ENCODE measurements at regions of chr4 and their contacts with region 1.

Region 1: DNA sequence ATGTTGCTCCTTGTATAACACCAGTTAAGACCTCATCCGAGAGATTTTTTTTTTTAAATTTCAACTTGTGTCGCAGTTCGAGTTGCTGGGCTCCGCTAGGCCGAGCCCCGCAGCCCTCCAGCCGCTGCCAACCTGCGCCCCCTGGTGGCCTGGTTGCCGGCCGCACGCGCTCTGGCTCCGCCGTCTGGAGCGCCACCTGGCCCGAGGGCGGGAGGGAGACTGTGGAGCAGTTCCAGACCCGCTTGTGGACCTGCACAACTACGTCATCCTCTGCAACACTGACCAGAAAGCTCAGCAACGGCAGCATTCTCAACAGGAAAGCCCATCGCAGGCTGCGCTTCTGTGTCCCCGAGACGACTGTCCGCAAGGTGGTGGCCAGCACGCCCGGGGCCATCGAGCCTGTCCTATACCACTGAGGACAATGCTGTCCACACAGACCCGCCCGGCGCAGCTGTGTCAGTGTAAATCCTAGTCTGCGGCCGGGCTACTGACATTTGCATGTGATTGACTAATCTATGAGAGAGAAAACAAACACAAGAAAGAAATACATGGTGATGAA is 39.1 kb downstream of the ARL9 start:
- DNase-seq: peak; percentile 89 to 90 (median 90)
- ATAC-seq: peak; percentile 100
- H3K4me3 ChIP-seq: peak overlapping the region; percentile 10 to 42 (median 38)
- H3K27ac ChIP-seq: no peak overlapping the region
- H3K4me1 ChIP-seq: peaks cover 0 to 4% (median 0%) of the 10 kb centered on the region in 4 donors
- H3K27me3 ChIP-seq: no peaks in the 10 kb centered on the region
- CTCF ChIP-seq: peak; percentile 94 to 100 (median 100)
- POLR2A ChIP-seq: no peak

Region 2: GRCh38 chr4:56424697-56425514 is 119.7 kb before region 1 on chr4:
- intact Hi-C with region 1: loop called in 1 of 2 experiments (anchors 10 kb)
- DNase-seq: no peak
- ATAC-seq: peak; percentile 41 to 61 (median 58)
- H3K4me3 ChIP-seq: no peak overlapping the region
- H3K27ac ChIP-seq: no peak overlapping the region
- H3K4me1 ChIP-seq: peaks cover 0 to 4% (median 1%) of the 10 kb centered on the region in 4 donors
- H3K27me3 ChIP-seq: no peaks in the 10 kb centered on the region
- CTCF ChIP-seq: peak; percentile 52 to 69 (median 62)
- POLR2A ChIP-seq: no peak